ENCODE measurements at regions of chr18 and their contacts with region 1.

Region 1: GRCh38 chr18:8890957-8891464 is 185.7 kb downstream of the MTCL1 start:
- DNase-seq: peak; percentile 97
- H3K4me3 ChIP-seq: no peak overlapping the region
- H3K27ac ChIP-seq: peak overlapping the region; percentile 68
- H3K4me1 ChIP-seq: peaks cover 10% of the 10 kb centered on the region
- H3K27me3 ChIP-seq: no peaks in the 10 kb centered on the region
- CTCF ChIP-seq: no peak

Region 2: GRCh38 chr18:8348051-8348720 is 542.8 kb before region 1 on chr18:
- CTCF ChIA-PET with region 1: no interaction called
- dilution Hi-C with region 1: no loop called
- in situ Hi-C with region 1: no loop called
- intact Hi-C with region 1: no loop called
- DNase-seq: no peak
- H3K4me3 ChIP-seq: no peak overlapping the region
- H3K27ac ChIP-seq: no peak overlapping the region
- H3K4me1 ChIP-seq: no peaks in the 10 kb centered on the region
- H3K27me3 ChIP-seq: no peaks in the 10 kb centered on the region
- CTCF ChIP-seq: no peak

Region 3: GRCh38 chr18:8835521-8835953 is 55.5 kb before region 1 on chr18:
- CTCF ChIA-PET with region 1: no interaction called
- dilution Hi-C with region 1: loop called (anchors 5 kb)
- in situ Hi-C with region 1: no loop called
- intact Hi-C with region 1: no loop called
- DNase-seq: peak; percentile 68
- H3K4me3 ChIP-seq: no peak overlapping the region
- H3K27ac ChIP-seq: no peak overlapping the region
- H3K4me1 ChIP-seq: peaks cover 14% of the 10 kb centered on the region
- H3K27me3 ChIP-seq: no peaks in the 10 kb centered on the region
- CTCF ChIP-seq: no peak

Region 4: DNA sequence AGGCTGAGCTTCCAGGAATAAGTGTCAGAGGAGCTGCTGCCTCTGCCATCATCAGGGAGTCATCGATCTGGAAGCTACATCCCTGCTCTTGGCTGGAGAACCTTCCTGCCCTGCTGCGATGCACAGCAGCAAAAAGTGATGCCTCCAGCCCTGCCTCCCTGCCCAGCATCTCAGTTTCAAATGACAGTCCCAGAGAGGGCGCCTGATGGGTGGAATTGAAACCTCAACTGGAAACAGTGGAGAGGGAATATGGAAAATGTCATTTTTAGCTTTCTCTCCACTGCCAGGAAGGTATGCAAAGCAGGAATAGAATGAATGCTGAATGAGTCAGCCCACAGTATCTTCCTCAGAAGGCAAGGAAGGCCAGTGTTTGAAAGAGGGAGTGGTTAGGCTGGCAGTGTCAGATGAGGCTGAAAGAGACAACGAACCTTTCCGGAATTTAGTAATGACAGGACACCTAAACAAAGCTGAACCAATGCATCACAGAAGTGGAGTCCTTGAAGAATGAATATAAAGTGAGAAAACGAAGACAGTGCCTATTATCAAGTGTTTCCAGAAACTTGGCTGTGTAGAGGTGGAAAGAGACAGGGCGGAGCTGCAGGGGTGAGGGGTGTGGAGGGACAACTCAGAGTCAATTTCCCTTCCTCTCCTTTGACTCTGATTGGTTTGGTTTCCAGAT is 57.6 kb after region 1 on chr18:
- CTCF ChIA-PET with region 1: no interaction called
- dilution Hi-C with region 1: loop called (anchors 5 kb)
- in situ Hi-C with region 1: no loop called
- intact Hi-C with region 1: loop called (anchors 2 kb)
- DNase-seq: peak; percentile 88
- H3K4me3 ChIP-seq: peak overlapping the region; percentile 5 to 30 (median 25)
- H3K27ac ChIP-seq: peak overlapping the region; percentile 65
- H3K4me1 ChIP-seq: peaks cover 58% of the 10 kb centered on the region
- H3K27me3 ChIP-seq: no peaks in the 10 kb centered on the region
- CTCF ChIP-seq: no peak

Region 5: DNA sequence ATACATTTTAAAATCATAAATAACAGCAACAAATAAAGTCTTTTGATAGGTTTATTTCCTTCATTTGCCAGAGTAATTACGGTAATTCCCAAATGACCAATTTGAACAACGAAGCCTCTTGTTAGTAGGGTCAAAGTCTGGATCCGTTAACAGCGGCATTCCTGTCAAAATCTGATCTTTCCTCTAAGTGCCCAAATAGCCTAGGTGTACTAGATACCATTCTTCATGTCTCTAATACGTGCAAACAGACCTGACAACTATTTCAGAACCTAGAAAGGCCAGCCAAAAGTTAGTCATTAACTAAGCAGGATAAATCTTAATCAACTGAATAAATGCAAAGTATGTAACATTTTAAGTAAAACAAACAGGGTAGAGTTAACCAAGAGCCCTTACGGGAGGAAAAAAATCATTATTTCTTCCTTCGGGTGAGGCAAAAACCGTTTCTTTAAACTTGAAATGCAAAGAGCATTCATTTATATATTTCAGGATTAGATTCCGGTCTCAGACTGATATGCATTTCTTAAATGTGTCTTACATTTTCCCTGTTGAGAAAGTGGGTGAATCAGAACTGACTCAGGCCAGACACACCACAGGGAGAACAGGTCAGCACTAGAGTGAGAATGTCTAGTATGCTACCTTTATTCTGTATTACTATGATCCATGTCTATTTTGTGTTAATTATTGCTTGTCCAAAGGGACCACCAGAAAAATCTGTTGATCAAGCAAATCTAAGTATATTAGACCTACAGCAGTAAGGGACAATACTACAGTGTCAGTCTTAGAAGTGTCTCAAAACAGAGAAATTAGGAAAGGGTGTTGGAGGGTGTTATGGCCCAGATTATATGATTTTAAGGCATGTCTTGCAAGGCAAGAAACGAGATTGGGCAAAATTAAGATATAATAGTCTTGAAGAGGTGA is 70.0 kb after region 1 on chr18:
- CTCF ChIA-PET with region 1: no interaction called
- dilution Hi-C with region 1: no loop called
- in situ Hi-C with region 1: no loop called
- intact Hi-C with region 1: loop called (anchors 5 kb)
- DNase-seq: peak; percentile 79
- H3K4me3 ChIP-seq: no peak overlapping the region
- H3K27ac ChIP-seq: peak overlapping the region; percentile 74
- H3K4me1 ChIP-seq: peaks cover 29% of the 10 kb centered on the region
- H3K27me3 ChIP-seq: no peaks in the 10 kb centered on the region
- CTCF ChIP-seq: no peak